ENCODE measurements at regions of chr19 and their contacts with region 1.

Region 1: GRCh38 chr19:45770192-45771101 is 1.4 kb upstream of the SIX5 start:
- DNase-seq: peak; percentile 89 to 93 (median 91)
- H3K4me3 ChIP-seq: peak overlapping the region; percentile 57 to 71
- H3K4me3 Mint-ChIP-seq: peak overlapping the region; percentile 84 to 92 (median 86)
- H3K27ac ChIP-seq: peak overlapping the region; percentile 15
- H3K27ac Mint-ChIP-seq: peak overlapping the region; percentile 61 to 94 (median 88)
- H3K4me1 ChIP-seq: peaks cover 22% of the 10 kb centered on the region
- H3K4me1 Mint-ChIP-seq: peaks cover 1 to 30% (median 5%) of the 10 kb centered on the region in 4 donors
- H3K27me3 ChIP-seq: no peaks in the 10 kb centered on the region
- H3K27me3 Mint-ChIP-seq: peaks cover 1 to 6% of the 10 kb centered on the region in 2 donors

Region 2: DNA sequence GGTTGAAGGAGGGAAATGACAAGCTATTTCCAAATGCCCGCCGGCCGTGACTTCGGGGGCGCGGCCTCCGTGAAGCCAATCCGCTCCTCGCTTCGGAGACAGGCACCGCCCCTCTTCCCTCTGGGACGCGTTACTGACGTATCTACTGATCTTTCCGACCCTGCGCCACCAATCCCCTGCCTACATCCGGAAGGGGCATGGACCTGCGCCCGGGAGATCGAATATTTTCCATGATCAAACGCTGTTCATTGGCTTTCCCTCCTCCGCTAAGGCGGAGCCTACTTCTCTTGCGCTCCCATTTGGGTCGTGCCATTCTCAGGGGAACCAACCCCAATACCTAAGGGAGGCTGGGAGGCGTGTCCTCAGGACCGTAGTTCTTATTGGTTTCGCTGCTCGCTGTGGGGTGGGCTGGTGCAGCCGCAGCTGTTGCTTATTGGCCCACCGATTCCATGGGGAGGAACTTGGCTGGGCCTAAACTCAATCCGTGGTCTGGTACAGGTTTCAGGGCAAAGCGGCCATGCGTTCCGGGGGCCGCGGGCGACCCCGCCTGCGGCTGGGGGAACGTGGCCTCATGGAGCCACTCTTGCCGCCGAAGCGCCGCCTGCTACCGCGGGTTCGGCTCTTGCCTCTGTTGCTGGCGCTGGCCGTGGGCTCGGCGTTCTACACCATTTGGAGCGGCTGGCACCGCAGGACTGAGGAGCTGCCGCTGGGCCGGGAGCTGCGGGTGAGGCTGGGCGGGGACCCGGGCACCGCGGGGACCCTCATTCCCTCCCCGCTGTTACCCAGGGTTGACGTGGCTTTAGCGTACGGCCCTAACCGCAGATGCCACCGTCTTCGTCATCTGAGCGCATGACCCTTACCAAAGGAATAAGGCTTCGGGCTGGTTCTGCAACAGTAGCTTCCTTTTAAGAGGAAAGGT is 78.0 kb before region 1 on chr19 and contains the start of gene QPCTL:
- CTCF ChIA-PET with region 1: interaction called, 11 read pairs
- POLR2A ChIA-PET with region 1: interaction called, 9 read pairs
- intact Hi-C with region 1: loop called (anchors 2 kb)
- DNase-seq: peak; percentile 98 to 99 (median 98)
- H3K4me3 ChIP-seq: peak within 1 kb of the TSS; percentile 70 to 94
- H3K4me3 Mint-ChIP-seq: peak within 1 kb of the TSS; percentile 90 to 100 (median 94)
- H3K27ac ChIP-seq: peak within 1 kb of the TSS; percentile 88
- H3K27ac Mint-ChIP-seq: peak within 1 kb of the TSS; percentile 91 to 100 (median 97)
- H3K4me1 ChIP-seq: peaks cover 17% of the 10 kb centered on the region
- H3K4me1 Mint-ChIP-seq: peaks cover 11 to 35% (median 17%) of the 10 kb centered on the region in 4 donors
- H3K27me3 ChIP-seq: no peaks in the 10 kb centered on the region
- H3K27me3 Mint-ChIP-seq: no peaks in the 10 kb centered on the region
- total RNA-seq, gene QPCTL: 10.8 to 11.4 TPM

Region 3: DNA sequence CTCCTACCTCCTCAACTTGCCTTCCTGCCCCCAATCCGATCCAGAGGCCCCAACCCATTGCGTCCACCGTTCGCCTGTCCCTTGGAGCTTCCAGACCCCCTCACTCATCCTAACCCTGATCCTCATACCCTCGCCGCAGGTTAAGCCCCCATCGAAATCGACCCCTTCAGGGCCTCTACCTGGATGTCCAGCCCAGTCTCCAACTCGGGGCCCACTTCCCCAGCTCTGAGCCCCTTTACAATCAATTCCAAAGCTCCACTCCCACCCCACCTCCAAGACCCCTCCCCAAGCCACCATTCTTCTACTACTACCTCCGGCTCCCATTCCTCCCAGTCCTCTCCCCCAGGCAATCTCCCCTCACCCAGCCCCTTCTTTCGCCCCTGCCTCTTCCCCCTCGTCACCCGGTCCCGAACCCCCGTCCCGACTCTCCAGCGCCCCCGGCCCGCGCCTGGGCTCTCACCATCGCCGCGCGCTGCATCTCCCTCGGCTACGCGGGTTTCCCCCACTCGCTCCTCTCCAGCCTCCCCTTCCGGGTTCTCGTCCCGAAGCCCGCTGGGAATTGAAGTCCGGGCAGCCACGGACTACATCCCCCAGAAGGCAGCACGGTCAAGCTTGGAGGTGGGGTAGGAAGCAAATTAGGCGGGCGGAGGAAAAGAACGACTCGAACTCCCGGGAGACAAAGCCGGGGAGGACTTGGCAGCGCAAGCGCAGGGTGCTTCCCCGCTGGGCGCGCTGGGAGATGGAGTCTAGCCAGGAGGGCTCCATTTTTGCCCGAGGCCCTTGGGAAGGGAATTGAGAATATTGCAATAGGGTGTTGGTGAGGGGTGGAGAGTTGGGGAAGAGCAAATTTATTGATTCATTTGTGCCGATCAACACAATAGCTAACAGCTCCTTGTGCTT is 39.8 kb before region 1 on chr19 and contains the start of gene FBXO46:
- CTCF ChIA-PET with region 1: interaction called, 7 read pairs
- POLR2A ChIA-PET with region 1: interaction called, 21 read pairs
- intact Hi-C with region 1: loop called (anchors 1 kb)
- DNase-seq: peak; percentile 90 to 97 (median 92)
- H3K4me3 ChIP-seq: peak within 1 kb of the TSS; percentile 68 to 97
- H3K4me3 Mint-ChIP-seq: peak within 1 kb of the TSS; percentile 89 to 100 (median 93)
- H3K27ac ChIP-seq: peak within 1 kb of the TSS; percentile 89
- H3K27ac Mint-ChIP-seq: peak within 1 kb of the TSS; percentile 83 to 96 (median 94)
- H3K4me1 ChIP-seq: peaks cover 35% of the 10 kb centered on the region
- H3K4me1 Mint-ChIP-seq: peaks cover 16 to 51% (median 30%) of the 10 kb centered on the region in 4 donors
- H3K27me3 ChIP-seq: no peaks in the 10 kb centered on the region
- H3K27me3 Mint-ChIP-seq: no peaks in the 10 kb centered on the region
- total RNA-seq, gene FBXO46: 33.1 to 37.3 TPM

Region 4: DNA sequence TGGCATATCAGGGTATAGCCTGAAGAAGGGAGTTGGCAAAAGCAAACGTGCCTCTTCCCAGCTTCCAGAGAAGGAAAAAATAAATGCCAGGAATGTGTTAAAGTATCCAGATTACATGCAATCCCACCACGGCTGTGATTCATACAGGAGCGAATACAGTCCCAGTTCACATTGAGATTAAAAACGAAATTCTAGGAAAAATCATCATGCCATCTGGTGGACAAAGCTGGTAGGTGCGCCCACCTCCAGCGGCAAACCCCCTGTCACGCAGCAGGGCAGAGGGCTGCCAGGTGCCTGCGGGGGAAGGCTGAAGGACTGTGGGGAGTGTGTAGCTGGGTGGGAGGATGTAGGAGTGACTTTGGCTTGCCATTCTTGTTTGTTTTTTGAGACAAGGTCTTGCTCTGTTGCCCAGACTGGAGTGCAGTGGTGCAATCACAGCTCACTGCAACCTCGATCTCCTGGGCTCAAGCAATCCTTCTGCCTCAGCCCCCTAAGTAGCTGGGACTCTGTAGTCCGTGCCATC is 28.6 kb after region 1 on chr19:
- CTCF ChIA-PET with region 1: interaction called, 238 read pairs
- POLR2A ChIA-PET with region 1: interaction called, 84 read pairs
- intact Hi-C with region 1: loop called (anchors 1 kb)
- DNase-seq: peak in 4 of 5 donors; percentile 57 to 65 (median 59)
- H3K4me3 ChIP-seq: no peak overlapping the region
- H3K4me3 Mint-ChIP-seq: no peak overlapping the region
- H3K27ac ChIP-seq: no peak overlapping the region
- H3K27ac Mint-ChIP-seq: peak overlapping the region in 1 of 7 donors; percentile 71
- H3K4me1 ChIP-seq: peaks cover 4% of the 10 kb centered on the region
- H3K4me1 Mint-ChIP-seq: peaks cover 4 to 12% (median 6%) of the 10 kb centered on the region in 4 donors
- H3K27me3 ChIP-seq: peaks cover 7% of the 10 kb centered on the region
- H3K27me3 Mint-ChIP-seq: peaks cover 13 to 20% of the 10 kb centered on the region in 2 donors

Region 5: DNA sequence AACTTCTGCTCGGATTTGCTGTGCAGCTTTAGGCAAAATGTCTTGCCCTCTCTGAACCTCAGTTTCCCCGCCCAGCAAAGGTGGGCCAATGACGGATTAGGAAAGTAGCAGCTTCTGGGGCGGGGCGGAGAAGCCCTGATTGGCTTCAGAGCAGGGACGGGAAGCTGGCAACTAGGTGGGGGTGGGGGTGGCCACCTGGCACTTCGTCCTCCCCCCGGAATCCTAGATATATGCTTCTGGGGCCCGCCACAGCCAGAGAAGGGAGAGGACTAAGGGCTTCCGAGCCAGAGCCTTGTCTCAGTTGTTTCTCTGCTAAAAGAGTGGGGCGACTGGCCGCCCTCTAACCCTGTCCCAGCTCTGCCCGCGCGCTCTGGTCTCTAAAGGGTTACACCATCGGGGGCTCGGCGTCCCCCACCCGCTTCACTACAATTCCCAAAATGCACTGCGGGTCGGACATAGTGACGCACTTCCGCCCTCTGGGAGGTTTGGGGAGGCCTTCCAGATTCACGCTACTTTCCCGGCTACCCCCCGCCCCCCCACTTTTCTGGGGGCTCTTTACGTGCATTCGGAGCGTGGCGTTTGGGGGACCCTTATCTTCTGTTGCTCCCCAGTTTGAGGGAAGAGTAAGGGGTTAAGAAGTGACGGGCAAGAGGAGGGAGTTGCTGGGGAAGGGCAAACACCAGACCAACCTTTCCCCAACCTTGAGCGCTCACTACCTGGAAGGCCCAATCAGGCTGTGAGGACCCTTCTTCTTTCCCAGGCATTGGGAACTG is 116.2 kb after region 1 on chr19:
- CTCF ChIA-PET with region 1: interaction called, 8 read pairs
- POLR2A ChIA-PET with region 1: interaction called, 11 read pairs
- intact Hi-C with region 1: loop called (anchors 1 kb)
- DNase-seq: peak; percentile 87 to 93 (median 91)
- H3K4me3 ChIP-seq: peak overlapping the region; percentile 65 to 71
- H3K4me3 Mint-ChIP-seq: peak overlapping the region; percentile 94 to 98 (median 98)
- H3K27ac ChIP-seq: peak overlapping the region; percentile 68
- H3K27ac Mint-ChIP-seq: peak overlapping the region; percentile 97 to 99 (median 99)
- H3K4me1 ChIP-seq: peaks cover 40% of the 10 kb centered on the region
- H3K4me1 Mint-ChIP-seq: peaks cover 11 to 36% (median 19%) of the 10 kb centered on the region in 4 donors
- H3K27me3 ChIP-seq: no peaks in the 10 kb centered on the region
- H3K27me3 Mint-ChIP-seq: peaks cover 0 to under 1% of the 10 kb centered on the region in 2 donors